Activated CD8-positive, alpha-beta T cell treated with anti-CD3 and anti-CD28 coated beads for 36 hours (primary cell): ENCODE measurements at regions of chr11 and their contacts with region 1.

Region 1: DNA sequence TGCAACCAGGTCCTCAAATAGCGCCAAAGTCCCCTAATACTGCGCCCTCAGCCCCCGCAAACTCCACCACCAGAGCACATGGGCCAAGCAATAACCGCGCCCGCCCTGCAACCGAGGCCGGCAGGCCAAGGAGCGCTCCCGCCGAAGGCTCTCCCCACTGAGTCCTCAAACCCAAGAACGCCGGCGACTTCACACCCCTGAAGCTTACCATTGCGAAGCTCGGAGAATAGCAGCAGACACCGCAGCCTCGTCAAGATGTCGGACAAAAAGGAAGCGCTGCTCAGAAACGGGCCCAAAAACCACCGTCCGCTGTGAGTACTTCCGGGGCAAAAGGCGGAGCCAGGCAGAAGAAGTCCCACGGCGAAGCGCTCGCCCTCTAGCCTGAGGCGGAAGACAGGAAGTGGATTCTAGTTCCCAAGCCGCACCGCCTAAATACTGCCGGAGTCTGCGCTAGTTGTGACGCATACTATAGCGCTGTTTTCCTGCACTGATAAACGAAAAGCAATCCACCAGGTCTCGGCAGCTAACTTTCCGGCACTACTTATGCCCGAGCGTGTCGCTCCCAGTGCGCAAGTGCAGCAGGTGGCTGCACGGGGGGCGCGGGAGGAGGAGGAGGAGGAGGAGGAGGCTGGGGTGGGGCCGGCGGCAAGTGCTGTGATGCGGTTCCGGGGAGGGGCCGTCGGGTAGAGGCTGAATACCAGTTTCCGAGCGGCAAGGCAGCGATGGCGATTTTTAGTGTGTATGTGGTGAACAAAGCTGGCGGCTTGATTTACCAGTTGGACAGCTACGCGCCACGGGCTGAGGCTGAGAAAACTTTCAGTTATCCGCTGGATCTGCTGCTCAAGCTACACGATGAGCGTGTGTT is at the starts of genes RPS25 and TRAPPC4:
- DNase-seq: peak; percentile 97
- ATAC-seq: peak; percentile 91
- H3K4me3 Mint-ChIP-seq: peak within 1 kb of the TSS; percentile 99
- H3K27ac Mint-ChIP-seq: peak within 1 kb of the TSS; percentile 99
- H3K4me1 Mint-ChIP-seq: peaks cover 53% of the 10 kb centered on the region
- H3K27me3 Mint-ChIP-seq: no peaks in the 10 kb centered on the region
- CTCF ChIP-seq: no peak
- total RNA-seq, gene RPS25: 1,901 to 1,911 TPM
- total RNA-seq, gene TRAPPC4: 69.5 to 71.4 TPM

Region 2: GRCh38 chr11:118917481-118918127 is 100.7 kb before region 1 on chr11:
- CTCF ChIA-PET with region 1: interaction called, 3 read pairs
- POLR2A ChIA-PET with region 1: interaction called, 12 read pairs
- intact Hi-C with region 1: no loop called
- DNase-seq: peak; percentile 83
- ATAC-seq: peak; percentile 35
- H3K4me3 Mint-ChIP-seq: peak overlapping the region; percentile 93
- H3K27ac Mint-ChIP-seq: peak overlapping the region; percentile 99
- H3K4me1 Mint-ChIP-seq: peaks cover 79% of the 10 kb centered on the region
- H3K27me3 Mint-ChIP-seq: no peaks in the 10 kb centered on the region
- CTCF ChIP-seq: no peak

Region 3: DNA sequence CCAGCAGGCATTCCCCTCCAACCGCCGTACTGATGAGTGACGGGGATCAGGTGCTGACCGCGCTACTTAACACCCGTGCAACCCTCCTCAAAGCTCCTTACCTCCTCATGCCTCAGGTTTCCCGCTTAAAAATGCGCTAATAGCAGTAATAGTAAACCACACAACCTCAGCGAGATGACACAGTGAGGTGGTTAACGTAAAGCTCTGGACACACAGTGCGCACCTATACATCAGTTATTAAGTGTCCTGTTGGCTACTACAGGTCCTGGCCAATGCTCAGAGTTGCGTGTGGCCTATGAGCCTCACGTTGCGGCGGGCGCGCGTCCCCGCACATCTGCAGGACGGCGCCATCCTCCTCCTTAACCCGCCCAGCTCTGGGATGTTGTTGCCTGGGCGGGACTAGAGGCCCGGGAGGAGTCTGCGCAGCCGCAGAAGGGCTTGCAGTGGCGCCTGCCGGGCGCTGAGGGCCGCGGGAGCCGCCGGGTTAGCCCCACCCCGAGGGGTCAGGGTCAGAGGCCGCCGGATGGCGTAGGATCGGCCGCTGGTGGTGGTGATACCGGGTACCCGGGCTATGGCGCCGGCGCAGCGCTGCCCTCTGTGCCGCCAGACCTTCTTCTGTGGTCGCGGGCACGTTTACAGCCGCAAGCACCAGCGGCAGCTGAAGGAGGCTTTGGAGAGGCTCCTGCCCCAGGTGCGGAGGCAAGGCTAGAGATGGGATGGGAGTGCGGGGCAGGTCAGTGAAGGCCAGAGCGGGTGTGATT is 20.5 kb before region 1 on chr11 and contains the start of gene CENATAC:
- CTCF ChIA-PET with region 1: interaction called, 5 read pairs
- POLR2A ChIA-PET with region 1: interaction called, 106 read pairs
- intact Hi-C with region 1: no loop called
- DNase-seq: peak; percentile 97
- ATAC-seq: peak; percentile 97
- H3K4me3 Mint-ChIP-seq: peak within 1 kb of the TSS; percentile 97
- H3K27ac Mint-ChIP-seq: peak within 1 kb of the TSS; percentile 99
- H3K4me1 Mint-ChIP-seq: peaks cover 31% of the 10 kb centered on the region
- H3K27me3 Mint-ChIP-seq: no peaks in the 10 kb centered on the region
- CTCF ChIP-seq: no peak
- total RNA-seq, gene CENATAC: 22.0 to 24.1 TPM

Region 4: GRCh38 chr11:119030329-119031049 is 12.2 kb after region 1 on chr11 and contains the start of gene SLC37A4:
- CTCF ChIA-PET with region 1: interaction called, 20 read pairs
- POLR2A ChIA-PET with region 1: interaction called, 98 read pairs
- intact Hi-C with region 1: no loop called
- DNase-seq: peak; percentile 99
- ATAC-seq: peak; percentile 87
- H3K4me3 Mint-ChIP-seq: peak within 1 kb of the TSS; percentile 70
- H3K27ac Mint-ChIP-seq: peak within 1 kb of the TSS; percentile 90
- H3K4me1 Mint-ChIP-seq: peaks cover 23% of the 10 kb centered on the region
- H3K27me3 Mint-ChIP-seq: no peaks in the 10 kb centered on the region
- CTCF ChIP-seq: peak; percentile 85
- total RNA-seq, gene SLC37A4: 32.4 to 35.2 TPM

Region 5: GRCh38 chr11:119095066-119095880 is 77.0 kb after region 1 on chr11:
- CTCF ChIA-PET with region 1: no interaction called
- POLR2A ChIA-PET with region 1: interaction called, 29 read pairs
- intact Hi-C with region 1: no loop called
- DNase-seq: peak; percentile 100
- ATAC-seq: peak; percentile 86
- H3K4me3 Mint-ChIP-seq: peak overlapping the region; percentile 93
- H3K27ac Mint-ChIP-seq: peak overlapping the region; percentile 91
- H3K4me1 Mint-ChIP-seq: peaks cover 41% of the 10 kb centered on the region
- H3K27me3 Mint-ChIP-seq: peaks cover 1% of the 10 kb centered on the region
- CTCF ChIP-seq: no peak

Region 6: GRCh38 chr11:119222308-119222707 is 204.0 kb after region 1 on chr11:
- CTCF ChIA-PET with region 1: no interaction called
- POLR2A ChIA-PET with region 1: no interaction called
- intact Hi-C with region 1: no loop called
- DNase-seq: no peak
- ATAC-seq: no peak
- H3K4me3 Mint-ChIP-seq: no peak overlapping the region
- H3K27ac Mint-ChIP-seq: peak overlapping the region; percentile 39
- H3K4me1 Mint-ChIP-seq: peaks cover 52% of the 10 kb centered on the region
- H3K27me3 Mint-ChIP-seq: no peaks in the 10 kb centered on the region
- CTCF ChIP-seq: no peak